Posterior vena cava (tissue), 2 donors: ENCODE measurements at regions of chr20 and their contacts with region 1.

Region 1: DNA sequence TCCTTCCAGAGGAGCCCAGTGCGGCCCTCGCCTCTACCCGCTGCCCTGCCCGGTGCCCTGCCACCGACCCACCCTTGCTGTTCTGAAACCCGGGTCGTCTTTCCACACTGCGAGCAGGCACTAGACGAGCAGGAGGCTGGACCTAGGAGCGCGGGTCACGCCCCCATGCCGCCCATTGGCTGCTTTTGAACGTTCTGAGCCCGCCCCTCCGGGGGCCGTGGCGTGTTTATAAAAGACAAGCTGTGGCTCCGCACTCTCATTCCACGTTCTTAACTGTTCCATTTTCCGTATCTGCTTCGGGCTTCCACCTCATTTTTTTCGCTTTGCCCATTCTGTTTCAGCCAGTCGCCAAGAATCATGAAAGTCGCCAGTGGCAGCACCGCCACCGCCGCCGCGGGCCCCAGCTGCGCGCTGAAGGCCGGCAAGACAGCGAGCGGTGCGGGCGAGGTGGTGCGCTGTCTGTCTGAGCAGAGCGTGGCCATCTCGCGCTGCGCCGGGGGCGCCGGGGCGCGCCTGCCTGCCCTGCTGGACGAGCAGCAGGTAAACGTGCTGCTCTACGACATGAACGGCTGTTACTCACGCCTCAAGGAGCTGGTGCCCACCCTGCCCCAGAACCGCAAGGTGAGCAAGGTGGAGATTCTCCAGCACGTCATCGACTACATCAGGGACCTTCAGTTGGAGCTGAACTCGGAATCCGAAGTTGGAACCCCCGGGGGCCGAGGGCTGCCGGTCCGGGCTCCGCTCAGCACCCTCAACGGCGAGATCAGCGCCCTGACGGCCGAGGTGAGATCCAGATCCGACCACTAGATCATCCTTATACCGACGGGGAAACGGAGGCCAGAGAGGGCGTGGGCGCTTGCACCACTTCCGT is at the start of gene ID1:
- DNase-seq: peak; percentile 98
- total RNA-seq, gene ID1: 117 to 145 TPM

Region 2: GRCh38 chr20:31565699-31566331 is 39.5 kb before region 1 on chr20:
- intact Hi-C with region 1: loop called (anchors 2 kb)
- DNase-seq: no peak

Region 3: DNA sequence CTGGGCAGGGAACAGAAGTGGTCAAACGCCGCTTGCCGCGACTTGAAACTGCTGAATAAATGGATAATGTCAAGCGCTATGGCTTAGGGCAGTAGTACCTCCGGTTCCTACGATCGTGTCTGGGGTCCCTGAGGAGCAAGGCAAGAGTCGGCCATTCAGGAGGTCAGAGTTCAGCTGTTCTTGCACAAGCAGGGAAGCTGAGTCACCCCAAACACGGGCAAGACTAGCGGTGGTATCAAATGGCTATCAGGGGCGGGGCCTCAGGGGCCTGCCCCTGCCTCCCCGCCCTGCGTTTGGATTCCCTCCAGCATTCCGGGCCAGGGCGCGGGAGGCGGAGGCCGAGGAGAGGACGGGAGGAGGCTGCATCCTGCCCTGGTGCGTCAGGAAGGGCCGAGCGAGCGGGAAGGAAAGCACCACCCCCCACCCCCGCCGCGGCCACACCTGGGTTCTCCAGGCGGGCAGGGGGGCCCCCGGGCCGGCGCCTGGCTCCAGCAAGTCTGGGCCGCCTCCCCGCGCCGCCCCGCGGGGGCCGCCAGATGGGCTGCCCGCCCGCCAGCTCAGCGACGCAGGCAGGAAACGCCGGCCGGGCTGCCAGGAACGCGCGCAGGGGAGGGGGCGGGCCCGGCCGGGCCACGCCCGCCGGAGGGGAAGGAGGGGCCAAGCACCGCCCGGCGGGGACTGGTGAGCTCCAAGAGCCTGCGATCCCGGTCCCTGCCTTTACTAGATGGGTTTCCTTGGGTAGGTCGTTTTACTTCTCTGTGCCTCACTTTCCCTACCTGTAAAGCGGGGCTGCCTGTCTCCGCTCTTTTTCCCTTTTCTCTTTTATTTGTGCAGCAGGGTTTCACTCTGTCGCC is 32.3 kb before region 1 on chr20:
- intact Hi-C with region 1: loop called in 1 of 2 experiments (anchors 2 kb)
- DNase-seq: peak; percentile 98

Region 4: DNA sequence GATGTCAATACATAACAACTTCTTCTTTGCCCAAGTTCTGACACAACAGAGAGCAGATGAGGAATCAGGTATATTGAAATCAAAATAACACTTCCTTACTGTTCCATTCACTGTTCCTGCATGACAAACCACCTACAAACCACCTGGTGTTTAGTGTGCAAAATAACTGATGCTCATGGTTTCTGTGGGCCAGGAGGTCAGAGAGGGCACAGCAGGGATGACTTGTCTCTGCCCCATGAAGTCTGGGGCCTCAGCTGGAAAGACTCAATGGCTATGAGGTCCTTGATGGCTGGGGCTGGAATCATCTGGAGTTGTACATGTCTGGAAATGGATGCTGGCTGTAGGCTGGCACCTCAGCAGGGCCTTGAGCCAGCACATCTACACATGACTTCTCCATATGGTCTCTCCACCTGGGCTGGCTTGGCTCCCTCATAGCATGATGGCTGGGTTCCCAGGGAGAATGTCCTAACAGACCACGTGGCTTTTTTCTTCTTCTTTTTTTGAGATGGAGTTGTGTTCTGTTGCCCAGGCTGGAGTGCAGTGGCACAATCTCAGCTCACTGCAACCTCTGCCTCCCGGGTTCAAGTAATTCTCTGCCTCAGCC is 25.0 kb after region 1 on chr20:
- intact Hi-C with region 1: no loop called
- DNase-seq: no peak